Mammary epithelial cell (primary cell): ENCODE measurements at regions of chr12 and their contacts with region 1.

Region 1: DNA sequence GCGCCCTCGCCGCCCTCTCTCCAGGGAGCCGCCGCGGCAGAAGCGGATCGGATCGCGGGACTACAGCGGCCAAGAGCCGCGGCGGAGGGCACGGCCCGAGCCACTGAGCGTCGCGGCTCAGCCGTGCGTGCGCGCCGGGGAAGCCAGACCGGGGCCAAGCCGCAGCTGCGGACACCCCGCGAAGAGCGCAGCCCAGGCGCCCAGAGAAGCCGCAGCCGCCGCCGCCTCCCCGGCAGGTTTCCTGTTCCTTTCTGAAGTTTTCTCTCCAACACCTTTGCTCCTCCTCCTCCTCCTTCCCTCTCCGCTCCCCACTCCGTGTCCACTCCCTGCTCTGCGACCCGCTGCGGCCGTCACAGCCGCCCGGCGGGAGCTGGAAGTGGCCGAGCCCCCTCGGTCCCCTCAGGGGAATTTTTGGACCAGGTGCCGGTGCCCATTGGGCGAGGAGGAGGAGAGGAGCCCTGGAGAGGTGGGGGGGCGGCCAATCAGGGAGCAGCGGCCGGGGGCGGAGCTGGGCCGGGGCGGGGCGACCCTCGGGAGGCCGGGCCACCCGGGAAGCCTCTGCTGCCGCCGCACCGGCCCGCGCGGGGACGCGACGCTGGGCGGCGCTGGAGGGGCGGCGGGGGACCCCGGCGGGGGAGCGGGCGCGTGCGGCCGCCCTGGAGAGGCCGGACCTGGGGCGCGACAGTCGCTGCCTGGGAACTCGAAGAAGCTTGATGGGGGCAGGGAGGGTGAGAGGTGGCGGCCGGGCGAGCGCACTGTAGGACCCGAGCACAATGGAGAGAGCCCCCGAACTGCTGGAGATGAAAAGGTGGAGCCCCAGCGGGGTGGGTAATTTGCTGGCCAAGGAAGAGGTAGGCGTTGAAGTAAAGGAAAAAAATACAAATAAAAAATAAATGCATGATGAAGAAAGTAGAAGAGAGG is at the start of gene ITPR2:
- DNase-seq: peak; percentile 95
- H3K4me3 ChIP-seq: peak within 1 kb of the TSS; percentile 92 to 97 (median 97)
- H3K27ac ChIP-seq: peak within 1 kb of the TSS; percentile 89
- H3K4me1 ChIP-seq: peaks cover 15% of the 10 kb centered on the region
- H3K27me3 ChIP-seq: no peaks in the 10 kb centered on the region
- CTCF ChIP-seq: peak in 1 of 2 donors; percentile 31
- total RNA-seq, gene ITPR2: 20.5 to 25.6 TPM

Region 2: DNA sequence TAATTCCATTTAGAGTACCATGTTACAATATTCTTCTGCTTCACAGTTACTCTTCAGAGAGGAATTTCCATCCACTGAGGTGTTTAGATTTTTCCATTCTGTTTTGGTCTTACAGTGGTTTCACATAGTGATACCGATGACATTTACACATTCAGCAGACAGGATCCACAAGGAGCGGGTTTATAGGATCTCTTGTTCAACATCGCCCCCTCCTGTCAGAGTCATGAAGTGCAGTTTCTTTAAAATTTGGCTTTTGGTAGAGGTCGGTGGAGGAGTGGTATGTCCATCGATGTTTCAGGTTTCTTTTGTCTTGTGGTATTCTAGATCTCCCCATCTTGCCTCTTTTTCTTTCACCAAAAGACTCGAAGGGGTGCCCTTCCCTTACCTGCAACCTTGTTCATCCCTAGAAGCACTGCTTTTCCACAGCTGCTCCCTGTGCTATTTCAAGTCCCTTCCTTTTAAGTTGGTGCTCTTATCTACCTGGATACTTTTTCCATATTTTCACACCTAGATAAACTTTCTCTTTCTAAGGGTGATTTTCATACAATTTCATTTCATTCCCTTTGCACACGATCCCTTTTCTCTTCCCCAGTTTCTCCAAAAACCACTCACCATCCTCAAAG is 181.4 kb before region 1 on chr12:
- CTCF ChIA-PET with region 1: no interaction called
- dilution Hi-C with region 1: no loop called
- in situ Hi-C with region 1: no loop called
- intact Hi-C with region 1: loop called (anchors 5 kb)
- DNase-seq: peak; percentile 67
- H3K4me3 ChIP-seq: no peak overlapping the region
- H3K27ac ChIP-seq: no peak overlapping the region
- H3K4me1 ChIP-seq: peaks cover 14% of the 10 kb centered on the region
- H3K27me3 ChIP-seq: no peaks in the 10 kb centered on the region
- CTCF ChIP-seq: peak; percentile 72 to 84

Region 3: DNA sequence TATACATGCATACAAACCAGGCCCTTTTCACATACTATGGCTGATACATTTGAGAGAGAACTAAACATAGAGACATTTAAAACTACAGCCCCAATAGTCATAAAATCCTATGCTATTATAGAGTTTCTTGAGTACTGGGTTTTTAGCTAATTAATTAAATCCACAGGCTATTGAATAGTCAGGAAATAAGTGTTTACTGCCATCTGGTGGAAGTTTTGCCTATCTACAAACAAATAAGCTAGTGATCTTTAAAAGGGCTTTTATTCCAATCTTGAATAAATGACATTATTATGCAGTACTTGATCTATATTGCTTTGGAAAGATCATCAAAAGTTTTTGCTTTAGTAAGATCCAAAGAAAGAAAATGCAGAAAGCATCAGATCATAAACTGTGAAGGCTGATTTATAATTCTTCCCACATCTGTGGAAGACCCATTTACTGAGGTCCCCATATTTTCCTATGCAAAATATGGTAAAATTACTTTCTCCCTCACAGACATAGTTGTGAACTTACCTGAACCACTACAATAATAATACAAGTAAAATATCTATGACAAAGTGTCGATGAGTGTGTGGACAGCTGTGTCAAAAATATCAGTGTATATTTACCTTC is 131.4 kb before region 1 on chr12:
- CTCF ChIA-PET with region 1: no interaction called
- dilution Hi-C with region 1: no loop called
- in situ Hi-C with region 1: no loop called
- intact Hi-C with region 1: loop called (anchors 5 kb)
- DNase-seq: peak; percentile 31
- H3K4me3 ChIP-seq: no peak overlapping the region
- H3K27ac ChIP-seq: no peak overlapping the region
- H3K4me1 ChIP-seq: no peaks in the 10 kb centered on the region
- H3K27me3 ChIP-seq: no peaks in the 10 kb centered on the region
- CTCF ChIP-seq: peak; percentile 43 to 57

Region 4: DNA sequence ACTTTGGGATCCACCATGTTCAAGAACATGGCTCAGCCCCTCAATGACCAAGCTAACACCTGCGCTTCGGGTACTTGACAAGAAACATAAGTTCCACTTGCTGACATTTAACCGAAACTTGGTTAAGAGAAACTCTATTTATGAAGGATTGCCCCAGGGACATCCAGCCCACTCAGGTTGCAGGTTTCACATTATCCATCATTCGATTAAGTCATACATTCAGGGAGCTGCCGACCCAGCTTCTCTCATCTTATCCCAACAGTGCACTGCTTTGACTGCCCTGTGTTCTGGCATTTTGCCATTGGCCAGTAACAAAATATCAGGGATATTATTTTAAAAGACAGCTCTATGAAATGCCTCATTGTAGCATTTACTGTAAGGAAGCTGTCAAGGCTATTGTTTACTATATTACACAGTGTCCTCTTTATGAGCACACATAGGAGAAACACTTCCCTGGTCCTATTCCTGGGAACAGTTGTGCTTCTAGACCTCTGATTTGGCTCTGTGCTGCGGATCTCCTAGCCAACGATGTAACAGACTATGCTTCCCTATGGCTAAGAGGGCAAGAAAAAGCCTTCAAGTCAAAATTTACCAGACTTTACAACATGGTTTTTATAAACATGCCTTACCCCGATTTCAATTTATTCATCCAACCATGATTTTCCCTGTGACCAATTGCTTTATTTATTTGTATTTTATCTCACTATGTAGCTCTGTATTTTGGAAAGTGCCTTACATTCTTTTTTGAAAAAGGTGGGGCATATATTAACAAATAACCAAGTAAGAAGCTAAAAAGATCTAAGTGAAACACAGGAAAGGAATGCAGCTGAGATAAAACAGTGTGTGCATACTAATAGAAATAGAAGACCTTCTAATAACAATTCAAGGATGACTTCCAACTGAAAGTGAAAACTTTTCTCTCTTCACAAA is 109.4 kb before region 1 on chr12:
- CTCF ChIA-PET with region 1: no interaction called
- dilution Hi-C with region 1: no loop called
- in situ Hi-C with region 1: no loop called
- intact Hi-C with region 1: loop called (anchors 5 kb)
- DNase-seq: peak; percentile 24
- H3K4me3 ChIP-seq: no peak overlapping the region
- H3K27ac ChIP-seq: peak overlapping the region; percentile 38
- H3K4me1 ChIP-seq: peaks cover 29% of the 10 kb centered on the region
- H3K27me3 ChIP-seq: no peaks in the 10 kb centered on the region
- CTCF ChIP-seq: no peak

Region 5: DNA sequence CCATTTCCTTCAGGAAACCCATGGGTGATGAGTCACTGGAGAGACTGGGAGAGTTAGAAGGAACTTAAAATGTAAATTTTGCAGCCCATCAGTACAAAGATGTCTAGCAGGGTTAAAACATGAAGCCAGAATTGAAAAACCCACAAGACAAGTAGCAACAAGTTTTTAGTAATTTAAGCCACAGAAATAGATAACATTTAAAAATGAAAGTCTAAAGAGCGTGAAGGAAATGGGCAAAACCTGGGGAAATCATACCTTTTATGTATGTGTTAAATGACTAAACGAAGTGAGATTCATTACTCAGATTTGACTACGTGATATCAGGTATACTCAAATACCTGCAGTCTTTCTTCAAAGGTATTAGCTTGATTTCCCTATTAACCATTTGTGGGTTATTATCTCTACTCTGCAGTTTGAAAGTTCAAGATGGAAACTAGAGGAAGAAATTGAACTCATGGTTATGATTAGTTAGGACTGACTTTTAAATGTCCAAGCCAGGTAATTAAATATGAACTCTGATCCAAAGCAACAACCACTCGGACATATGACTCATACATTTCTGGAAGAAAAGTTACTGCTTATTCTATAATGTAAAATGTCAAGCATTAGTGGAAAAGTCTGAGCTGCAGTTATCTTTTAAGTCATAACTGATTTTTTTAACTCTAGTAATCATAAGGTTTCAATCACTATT is 84.2 kb before region 1 on chr12:
- CTCF ChIA-PET with region 1: no interaction called
- dilution Hi-C with region 1: no loop called
- in situ Hi-C with region 1: no loop called
- intact Hi-C with region 1: loop called (anchors 2 kb)
- DNase-seq: peak; percentile 65
- H3K4me3 ChIP-seq: peak overlapping the region; percentile 6 to 55 (median 49)
- H3K27ac ChIP-seq: peak overlapping the region; percentile 69
- H3K4me1 ChIP-seq: peaks cover 44% of the 10 kb centered on the region
- H3K27me3 ChIP-seq: no peaks in the 10 kb centered on the region
- CTCF ChIP-seq: no peak

Region 6: DNA sequence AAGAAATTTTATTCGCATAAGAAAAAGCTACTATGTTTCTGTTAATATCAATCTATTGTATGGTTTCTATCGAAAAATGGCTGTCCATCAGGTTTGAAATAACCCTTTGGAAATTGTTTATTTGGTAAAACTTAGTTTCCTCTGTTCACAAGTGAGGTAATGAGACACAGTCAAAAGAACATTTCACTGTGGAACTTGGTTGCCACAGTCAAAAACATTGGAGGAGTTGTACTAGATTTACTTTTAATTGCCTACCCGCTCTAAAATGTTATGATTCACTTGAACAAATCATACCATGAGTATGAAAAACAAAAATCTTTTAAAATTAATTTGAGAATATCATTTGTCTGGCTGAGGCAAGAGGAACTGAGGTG is 46.6 kb before region 1 on chr12:
- CTCF ChIA-PET with region 1: no interaction called
- dilution Hi-C with region 1: no loop called
- in situ Hi-C with region 1: no loop called
- intact Hi-C with region 1: loop called (anchors 5 kb)
- DNase-seq: no peak
- H3K4me3 ChIP-seq: no peak overlapping the region
- H3K27ac ChIP-seq: no peak overlapping the region
- H3K4me1 ChIP-seq: peaks cover 10% of the 10 kb centered on the region
- H3K27me3 ChIP-seq: no peaks in the 10 kb centered on the region
- CTCF ChIP-seq: no peak

Region 7: DNA sequence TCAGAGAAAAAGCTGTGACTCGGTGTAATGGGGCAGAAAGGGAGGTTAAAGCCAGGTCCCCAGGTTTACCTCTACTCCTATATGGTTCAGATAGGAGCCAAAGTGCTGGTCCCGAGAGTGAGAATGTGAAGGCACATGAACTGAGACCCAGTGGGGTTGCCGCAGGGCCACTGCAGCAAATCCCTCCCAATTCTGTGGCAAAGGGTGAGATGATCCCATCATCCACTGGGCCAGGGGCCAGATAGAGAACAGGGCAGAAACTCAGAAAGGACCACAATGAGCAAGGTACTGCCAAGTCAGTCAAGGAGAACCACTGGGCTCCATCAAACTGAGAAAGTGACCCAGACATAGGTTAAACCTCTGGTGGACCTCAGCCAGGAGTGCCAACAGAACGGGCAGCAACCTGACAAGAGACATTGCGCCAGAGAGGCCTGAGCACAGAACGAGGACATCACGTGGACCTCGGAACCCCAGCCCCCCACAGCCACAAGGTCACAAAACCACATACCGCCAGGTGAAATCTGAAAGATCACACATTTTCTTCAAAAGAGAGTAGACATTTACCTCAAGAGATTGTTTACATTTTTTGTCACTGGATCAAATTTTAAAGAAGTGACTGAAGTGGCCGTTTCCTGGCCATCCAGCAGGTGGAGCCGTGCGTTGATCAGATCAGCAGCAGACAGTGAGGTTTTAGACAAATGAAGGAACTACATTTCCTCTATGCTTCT is 20.4 kb after region 1 on chr12:
- CTCF ChIA-PET with region 1: no interaction called
- dilution Hi-C with region 1: no loop called
- in situ Hi-C with region 1: no loop called
- intact Hi-C with region 1: no loop called
- DNase-seq: peak; percentile 39
- H3K4me3 ChIP-seq: no peak overlapping the region
- H3K27ac ChIP-seq: no peak overlapping the region
- H3K4me1 ChIP-seq: no peaks in the 10 kb centered on the region
- H3K27me3 ChIP-seq: no peaks in the 10 kb centered on the region
- CTCF ChIP-seq: peak; percentile 84 to 96

Region 8: DNA sequence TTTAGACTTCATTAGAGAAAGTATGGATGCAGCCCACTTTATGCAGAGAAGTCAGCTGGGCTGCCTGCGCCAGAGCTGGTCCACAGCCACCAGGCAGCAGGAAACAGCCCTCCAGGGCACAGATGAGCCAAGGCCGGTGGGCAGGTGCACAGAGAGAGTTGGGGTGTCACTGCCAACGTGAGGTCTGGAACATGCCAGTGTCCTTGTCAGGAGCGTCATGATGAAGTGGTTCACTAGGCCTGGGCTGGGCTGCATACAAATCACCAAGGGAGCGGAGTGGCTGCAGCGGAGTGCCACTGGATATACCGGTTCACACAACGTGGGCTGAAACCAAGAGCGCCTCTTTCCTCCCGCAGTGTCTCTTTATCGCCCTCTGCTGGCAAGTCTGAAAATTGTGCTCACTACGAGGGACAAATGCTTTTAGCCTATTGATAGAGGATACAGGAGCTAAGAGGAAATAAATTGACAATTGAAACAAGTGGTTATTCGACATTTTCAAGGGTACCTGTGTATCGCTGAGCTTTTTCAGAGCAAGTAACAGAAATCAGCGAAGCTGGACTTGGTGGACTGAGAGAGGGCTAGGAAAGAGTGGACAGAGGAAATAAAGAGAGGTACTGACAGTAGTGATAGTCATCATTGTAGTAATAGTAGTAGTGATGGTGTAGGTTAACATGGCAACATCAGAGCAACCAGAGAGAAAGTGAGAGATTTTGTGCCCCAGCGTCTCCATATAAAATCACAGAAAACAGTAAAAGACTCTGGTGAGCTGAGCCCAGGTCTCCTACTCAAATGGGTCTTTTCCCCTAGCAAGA is 51.9 kb after region 1 on chr12:
- CTCF ChIA-PET with region 1: interaction called, 11 read pairs
- dilution Hi-C with region 1: no loop called
- in situ Hi-C with region 1: no loop called
- intact Hi-C with region 1: no loop called
- DNase-seq: peak; percentile 75
- H3K4me3 ChIP-seq: no peak overlapping the region
- H3K27ac ChIP-seq: no peak overlapping the region
- H3K4me1 ChIP-seq: peaks cover 3% of the 10 kb centered on the region
- H3K27me3 ChIP-seq: no peaks in the 10 kb centered on the region
- CTCF ChIP-seq: peak; percentile 95 to 97